Ovary (tissue), 10 donors: ENCODE measurements at regions of chr10 and their contacts with region 1.

Region 1: GRCh38 chr10:126080879-126081411 is 184.6 kb downstream of the FANK1 start:
- DNase-seq: peak in 2 of 5 donors; percentile 44 to 45
- H3K4me3 ChIP-seq: peak overlapping the region; percentile 13
- H3K27ac ChIP-seq: peak overlapping the region in 1 of 2 donors; percentile 72
- H3K4me1 ChIP-seq: peaks cover 10% of the 10 kb centered on the region
- H3K27me3 ChIP-seq: no peaks in the 10 kb centered on the region
- CTCF ChIP-seq: no peak
- EP300 ChIP-seq: no peak
- POLR2A ChIP-seq: no peak

Region 2: DNA sequence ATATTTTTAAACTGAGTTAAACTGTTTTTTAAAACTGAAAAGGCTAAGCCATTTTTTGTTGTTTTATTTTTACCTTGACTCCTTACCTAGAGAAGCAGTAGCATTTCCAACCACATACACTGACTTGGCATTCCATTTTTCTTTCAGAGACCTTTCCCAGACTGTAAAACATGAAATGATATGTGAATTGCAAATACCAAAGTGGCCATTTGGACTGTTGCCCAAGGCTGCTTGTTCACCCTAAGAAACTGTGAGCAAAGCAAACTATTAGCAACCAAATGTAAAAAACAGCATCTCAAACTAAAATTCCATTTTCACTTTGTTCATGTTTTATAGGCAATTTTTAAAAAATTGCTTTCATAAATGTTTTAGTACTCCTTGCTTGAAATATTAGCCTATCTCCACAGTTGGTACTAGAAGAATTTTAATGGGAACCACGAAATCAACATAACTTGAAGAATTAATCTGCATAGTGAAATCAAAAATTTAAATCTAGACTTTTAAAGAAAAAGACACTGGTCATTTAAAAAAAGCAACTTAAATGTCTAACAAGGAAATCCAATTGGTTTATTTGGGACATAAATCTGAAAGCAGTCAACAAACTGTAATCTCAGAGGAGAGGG is 268.7 kb before region 1 on chr10:
- intact Hi-C with region 1: no loop called
- DNase-seq: peak in 3 of 5 donors; percentile 42 to 77 (median 47)
- H3K4me3 ChIP-seq: no peak overlapping the region
- H3K27ac ChIP-seq: no peak overlapping the region
- H3K4me1 ChIP-seq: peaks cover 2% of the 10 kb centered on the region
- H3K27me3 ChIP-seq: no peaks in the 10 kb centered on the region
- CTCF ChIP-seq: no peak
- EP300 ChIP-seq: no peak
- POLR2A ChIP-seq: no peak

Region 3: GRCh38 chr10:125846894-125847293 is 234.1 kb before region 1 on chr10:
- intact Hi-C with region 1: no loop called
- DNase-seq: no peak
- H3K4me3 ChIP-seq: no peak overlapping the region
- H3K27ac ChIP-seq: no peak overlapping the region
- H3K4me1 ChIP-seq: peaks cover 32% of the 10 kb centered on the region
- H3K27me3 ChIP-seq: no peaks in the 10 kb centered on the region
- CTCF ChIP-seq: no peak
- EP300 ChIP-seq: no peak
- POLR2A ChIP-seq: no peak

Region 4: DNA sequence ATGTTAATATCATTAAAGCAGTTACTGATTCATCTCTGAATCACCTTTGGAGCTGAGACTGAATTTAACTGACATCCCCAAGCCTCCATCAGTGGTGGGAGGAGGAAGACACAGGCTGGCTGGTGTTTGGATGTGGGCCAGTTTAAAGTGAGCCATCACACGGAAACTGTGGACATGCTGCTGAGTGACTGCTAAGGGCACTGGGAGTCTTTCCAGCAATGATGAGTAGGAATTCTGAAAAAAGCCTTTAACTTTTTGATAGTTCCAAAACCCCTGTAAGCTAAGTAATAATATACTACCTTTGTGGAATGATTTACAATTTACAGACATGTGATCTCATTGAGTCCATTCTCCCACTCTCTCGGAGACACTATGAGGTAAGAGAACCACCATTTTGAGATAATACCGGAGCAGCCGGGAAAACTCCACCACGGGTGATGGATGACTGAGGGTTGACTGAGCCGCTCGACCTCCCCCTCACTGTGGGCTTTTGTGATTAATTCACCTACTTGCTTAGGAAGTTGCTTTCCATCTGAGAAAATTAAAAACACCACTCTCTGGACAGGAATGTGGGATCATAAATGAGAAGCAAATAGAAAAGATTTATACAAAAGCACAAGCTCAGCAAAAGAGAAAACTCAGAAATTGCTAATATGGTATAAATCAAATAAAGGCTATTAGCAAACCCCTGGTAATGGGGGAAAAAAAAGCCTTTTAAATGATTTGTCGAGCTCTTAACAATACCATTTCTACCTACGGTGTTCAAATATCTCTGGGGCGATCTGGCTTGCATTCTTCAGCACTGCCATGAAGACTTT is 10.2 kb after region 1 on chr10:
- intact Hi-C with region 1: no loop called
- DNase-seq: no peak
- H3K4me3 ChIP-seq: no peak overlapping the region
- H3K27ac ChIP-seq: no peak overlapping the region
- H3K4me1 ChIP-seq: peaks cover 6% of the 10 kb centered on the region
- H3K27me3 ChIP-seq: no peaks in the 10 kb centered on the region
- CTCF ChIP-seq: no peak
- EP300 ChIP-seq: no peak
- POLR2A ChIP-seq: no peak

Region 5: DNA sequence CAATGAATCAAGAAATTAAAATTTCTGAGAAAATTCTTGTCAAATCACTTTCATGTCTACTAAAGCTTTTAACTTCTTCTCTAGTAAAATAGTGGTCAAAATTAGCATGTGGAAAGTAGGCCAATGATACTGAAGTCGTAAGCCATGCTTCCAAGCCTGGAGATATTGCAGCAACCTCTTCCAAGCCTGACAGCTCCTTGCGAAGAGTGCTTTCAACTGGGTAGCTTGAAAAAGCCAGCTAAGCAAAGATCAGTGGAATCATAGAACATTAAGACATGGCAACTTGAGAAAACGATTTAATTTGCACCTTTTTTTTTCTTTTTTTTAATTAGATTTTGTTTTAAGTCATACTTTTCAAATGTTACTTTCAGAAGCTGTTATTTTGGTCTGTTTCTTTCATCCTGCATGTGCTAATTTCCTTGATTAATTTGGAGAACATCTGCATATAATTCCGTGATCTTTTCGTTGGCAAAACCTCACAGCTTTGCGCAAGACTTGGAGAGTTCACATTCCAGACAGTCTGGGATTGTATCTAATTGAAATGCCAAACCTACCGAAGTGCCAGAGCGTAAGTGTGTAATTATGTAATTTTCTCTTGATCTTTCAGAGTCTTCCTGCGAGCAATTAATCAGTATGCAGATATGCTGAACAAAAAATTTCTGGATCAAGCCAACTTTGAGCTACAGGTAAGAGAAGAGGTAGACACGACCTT is 1257.6 kb after region 1 on chr10:
- intact Hi-C with region 1: loop called in 1 of 4 experiments (anchors 5 kb)
- DNase-seq: no peak
- H3K4me3 ChIP-seq: no peak overlapping the region
- H3K27ac ChIP-seq: no peak overlapping the region
- H3K4me1 ChIP-seq: peaks cover 8% of the 10 kb centered on the region
- H3K27me3 ChIP-seq: no peaks in the 10 kb centered on the region
- CTCF ChIP-seq: no peak
- EP300 ChIP-seq: no peak
- POLR2A ChIP-seq: no peak